Heart left ventricle (tissue), 16 donors: ENCODE measurements at regions of chr15 and their contacts with region 1.

Region 1: GRCh38 chr15:38354315-38354929 is 99.5 kb upstream of the FAM98B start:
- DNase-seq: peak in 4 of 5 donors; percentile 43 to 61 (median 58)
- ATAC-seq: peak; percentile 37 to 72 (median 61)
- H3K4me3 ChIP-seq: no peak overlapping the region
- H3K27ac ChIP-seq: no peak overlapping the region
- H3K4me1 ChIP-seq: peaks cover 0 to 11% (median 0%) of the 10 kb centered on the region in 12 donors
- H3K27me3 ChIP-seq: no peaks in the 10 kb centered on the region
- CTCF ChIP-seq: peak; percentile 66 to 92 (median 81)
- POLR2A ChIP-seq: no peak

Region 2: DNA sequence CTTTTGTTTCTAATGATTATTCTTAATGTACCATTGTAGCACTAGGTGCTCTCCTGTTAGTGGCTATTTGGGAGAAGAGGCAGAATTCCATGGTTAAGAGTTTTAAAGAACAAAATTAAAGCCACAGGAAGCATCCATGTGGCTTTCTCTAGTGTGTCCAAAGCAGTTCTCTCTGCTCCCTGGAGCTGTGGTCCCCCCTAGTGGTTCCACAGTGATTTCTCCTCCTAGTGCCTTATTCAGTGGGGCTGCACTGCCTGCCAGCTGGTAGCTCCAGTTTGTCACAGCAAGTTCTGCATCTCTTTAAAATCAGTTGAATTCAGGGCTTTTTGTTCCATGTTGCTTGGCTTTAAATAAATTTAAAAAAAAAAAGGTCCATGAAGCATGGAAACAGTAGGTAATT is 59.9 kb after region 1 on chr15:
- intact Hi-C with region 1: loop called in 1 of 10 experiments (anchors 10 kb)
- DNase-seq: peak; percentile 56 to 69 (median 63)
- ATAC-seq: peak in 3 of 4 donors; percentile 88 to 95 (median 88)
- H3K4me3 ChIP-seq: no peak overlapping the region
- H3K27ac ChIP-seq: no peak overlapping the region
- H3K4me1 ChIP-seq: peaks cover 0 to 20% (median 0%) of the 10 kb centered on the region in 12 donors
- H3K27me3 ChIP-seq: no peaks in the 10 kb centered on the region
- CTCF ChIP-seq: peak; percentile 52 to 74 (median 63)
- POLR2A ChIP-seq: no peak